Activated CD8-positive, alpha-beta T cell treated with anti-CD3 and anti-CD28 coated beads for 36 hours (primary cell): ENCODE measurements at regions of chr9 and their contacts with region 1.

Region 1: DNA sequence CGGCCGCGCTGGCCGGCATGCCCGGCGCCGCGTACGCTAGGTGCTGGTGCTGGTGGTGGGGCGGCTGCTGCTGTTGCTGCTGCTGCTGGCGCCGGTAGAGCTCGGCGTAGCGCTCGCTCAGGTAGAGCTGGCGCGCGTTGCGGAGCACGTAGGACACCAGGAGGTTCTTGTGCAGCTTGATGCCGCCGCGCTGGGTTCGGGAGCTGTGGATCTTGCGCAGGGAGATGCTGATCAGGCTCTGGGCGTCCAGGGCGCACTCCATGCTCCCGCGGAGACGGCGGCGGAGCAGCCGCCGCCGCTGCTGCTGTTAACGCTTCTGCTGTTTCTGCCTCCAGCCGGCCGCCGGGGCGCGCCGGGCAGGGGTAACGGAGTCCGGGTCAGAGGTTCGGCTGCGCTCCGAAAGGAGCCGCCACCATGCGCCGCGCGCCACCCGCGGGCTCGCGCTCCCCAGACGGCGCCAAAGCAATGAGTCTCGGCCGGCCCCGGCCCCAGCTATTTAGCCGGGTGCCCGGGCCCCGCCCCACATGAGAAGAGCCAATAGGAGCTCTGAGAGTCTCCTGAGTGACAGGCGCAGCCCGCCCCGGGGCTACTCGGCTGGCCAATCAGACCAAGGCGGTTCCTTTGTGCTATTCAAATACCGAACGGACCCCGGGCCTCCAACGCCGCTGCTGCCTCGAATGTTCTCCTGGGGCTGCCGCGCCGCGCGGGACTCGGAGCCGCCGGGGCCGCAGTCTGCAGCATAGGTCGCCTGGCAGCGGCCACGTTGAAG is at the start of gene IER5L:
- DNase-seq: peak; percentile 96
- ATAC-seq: peak; percentile 86
- H3K4me3 Mint-ChIP-seq: peak within 1 kb of the TSS; percentile 89
- H3K27ac Mint-ChIP-seq: peak within 1 kb of the TSS; percentile 34
- H3K4me1 Mint-ChIP-seq: peaks cover 1% of the 10 kb centered on the region
- H3K27me3 Mint-ChIP-seq: peaks cover 6% of the 10 kb centered on the region
- CTCF ChIP-seq: no peak
- total RNA-seq, gene IER5L: 3.7 to 4.1 TPM

Region 2: DNA sequence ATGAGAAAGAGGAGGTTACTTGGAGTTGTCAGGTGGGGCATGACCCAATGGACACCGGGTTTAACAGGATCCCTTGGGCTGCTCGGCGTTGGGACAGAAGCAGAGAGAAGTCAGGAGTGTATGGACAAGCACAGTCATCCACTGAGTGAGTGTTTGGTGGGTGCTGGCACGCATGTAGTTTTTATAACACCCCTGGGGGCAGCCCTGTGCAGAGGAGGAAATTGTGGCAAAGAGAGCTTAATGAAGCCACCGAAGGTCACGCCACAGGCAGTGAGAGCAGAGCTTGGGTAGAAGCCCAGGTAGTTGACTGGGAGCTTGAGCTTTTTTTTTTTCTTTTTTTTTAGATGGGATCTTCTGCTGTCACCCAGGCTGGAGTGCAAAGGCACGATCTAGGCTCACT is 43.3 kb after region 1 on chr9:
- CTCF ChIA-PET with region 1: interaction called, 10 read pairs
- POLR2A ChIA-PET with region 1: interaction called, 3 read pairs
- intact Hi-C with region 1: no loop called
- DNase-seq: peak; percentile 82
- ATAC-seq: peak; percentile 90
- H3K4me3 Mint-ChIP-seq: no peak overlapping the region
- H3K27ac Mint-ChIP-seq: peak overlapping the region; percentile 41
- H3K4me1 Mint-ChIP-seq: peaks cover 42% of the 10 kb centered on the region
- H3K27me3 Mint-ChIP-seq: no peaks in the 10 kb centered on the region
- CTCF ChIP-seq: no peak

Region 3: DNA sequence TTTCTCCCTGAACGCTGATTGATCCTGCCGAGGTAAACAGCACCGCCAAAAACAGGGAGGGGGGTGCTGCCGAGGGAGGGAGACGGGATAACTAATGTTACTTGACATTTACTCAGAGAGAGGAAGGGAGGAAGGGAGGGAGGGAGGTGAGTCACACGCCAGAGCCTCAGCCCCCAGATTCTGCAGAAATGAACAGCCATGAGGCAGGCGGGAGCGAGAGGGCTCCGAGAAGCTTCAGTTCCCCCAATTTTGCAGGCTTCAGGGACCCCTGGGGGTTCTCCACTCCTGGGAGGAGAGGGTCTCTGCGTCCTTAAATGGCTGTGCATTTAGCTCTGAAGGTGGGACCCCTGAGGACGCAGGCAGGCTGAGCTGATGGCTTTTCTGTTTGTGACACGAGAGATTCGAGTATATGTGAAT is 59.2 kb after region 1 on chr9:
- CTCF ChIA-PET with region 1: interaction called, 19 read pairs
- POLR2A ChIA-PET with region 1: interaction called, 11 read pairs
- intact Hi-C with region 1: no loop called
- DNase-seq: peak; percentile 87
- ATAC-seq: peak; percentile 79
- H3K4me3 Mint-ChIP-seq: peak overlapping the region; percentile 78
- H3K27ac Mint-ChIP-seq: peak overlapping the region; percentile 96
- H3K4me1 Mint-ChIP-seq: peaks cover 63% of the 10 kb centered on the region
- H3K27me3 Mint-ChIP-seq: no peaks in the 10 kb centered on the region
- CTCF ChIP-seq: no peak

Region 4: GRCh38 chr9:129320575-129321263 is 142.7 kb after region 1 on chr9:
- CTCF ChIA-PET with region 1: interaction called, 14 read pairs
- POLR2A ChIA-PET with region 1: interaction called, 3 read pairs
- intact Hi-C with region 1: loop called (anchors 10 kb)
- DNase-seq: peak; percentile 75
- ATAC-seq: peak; percentile 89
- H3K4me3 Mint-ChIP-seq: peak overlapping the region; percentile 72
- H3K27ac Mint-ChIP-seq: peak overlapping the region; percentile 85
- H3K4me1 Mint-ChIP-seq: peaks cover 26% of the 10 kb centered on the region
- H3K27me3 Mint-ChIP-seq: no peaks in the 10 kb centered on the region
- CTCF ChIP-seq: no peak

Region 5: GRCh38 chr9:129610473-129611301 is 432.7 kb after region 1 on chr9:
- CTCF ChIA-PET with region 1: interaction called, 7 read pairs
- POLR2A ChIA-PET with region 1: no interaction called
- intact Hi-C with region 1: loop called (anchors 10 kb)
- DNase-seq: peak; percentile 78
- ATAC-seq: peak; percentile 66
- H3K4me3 Mint-ChIP-seq: peak overlapping the region; percentile 62
- H3K27ac Mint-ChIP-seq: peak overlapping the region; percentile 59
- H3K4me1 Mint-ChIP-seq: peaks cover 32% of the 10 kb centered on the region
- H3K27me3 Mint-ChIP-seq: no peaks in the 10 kb centered on the region
- CTCF ChIP-seq: peak; percentile 99